ENCODE measurements at regions of chr17 and their contacts with region 1.

Region 1: GRCh38 chr17:41451154-41451728 is 10.5 kb upstream of the KRT38 start:
- DNase-seq: no peak
- H3K4me3 ChIP-seq: no peak overlapping the region
- CTCF ChIP-seq: no peak

Region 2: DNA sequence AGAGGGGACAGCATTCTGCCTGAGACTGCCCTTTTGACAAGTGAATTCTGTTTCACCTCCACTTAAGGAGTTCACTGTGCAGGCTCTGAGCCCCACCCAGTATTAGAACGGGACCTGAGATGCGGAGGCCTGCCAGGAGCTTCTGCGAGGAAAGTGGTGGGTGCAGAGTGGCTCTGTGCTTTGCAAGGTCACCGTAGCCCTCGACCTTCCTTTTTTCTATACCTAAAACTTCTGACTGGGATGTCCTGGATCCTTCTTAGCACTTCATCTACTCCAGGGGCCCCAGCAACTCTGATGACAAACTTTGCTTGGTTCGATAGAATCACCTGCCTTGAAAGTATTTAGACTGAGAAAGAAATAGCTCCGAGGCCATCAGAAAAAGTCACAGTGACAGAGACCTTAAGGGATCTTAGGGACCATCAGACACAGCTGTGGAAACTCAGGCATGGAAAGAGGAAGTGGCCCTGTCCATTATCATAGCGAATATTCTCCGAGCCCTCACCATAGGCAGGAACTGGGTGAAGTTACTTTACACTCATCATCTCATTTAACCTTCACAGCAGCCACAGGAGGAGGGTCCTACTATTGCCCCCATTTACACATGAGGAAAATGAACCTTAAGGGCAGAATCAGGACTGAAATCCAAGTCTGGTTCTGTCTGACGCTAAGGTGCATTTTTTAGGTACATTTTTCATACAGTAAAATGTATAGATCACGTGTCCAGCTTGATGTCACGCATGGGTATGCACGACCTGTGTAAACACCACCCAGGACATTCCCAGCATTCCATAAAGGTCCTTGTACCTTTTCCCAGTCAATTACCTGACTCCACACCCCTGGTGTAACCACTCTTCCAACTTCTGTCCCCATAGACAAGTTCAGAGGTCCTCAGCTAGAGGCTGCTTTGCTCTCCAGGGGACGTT is 54.8 kb after region 1 on chr17:
- in situ Hi-C with region 1: loop called (anchors 5 kb)
- DNase-seq: no peak
- H3K4me3 ChIP-seq: no peak overlapping the region
- CTCF ChIP-seq: no peak

Region 3: GRCh38 chr17:41624208-41625101 is 173.2 kb after region 1 on chr17 and contains the start of gene KRT17:
- in situ Hi-C with region 1: no loop called
- DNase-seq: no peak
- H3K4me3 ChIP-seq: no peak within 1 kb of the TSS
- CTCF ChIP-seq: no peak

Measured in astrocyte of the cerebellum (primary cell).